CD4-positive, alpha-beta T cell (primary cell): ENCODE measurements at regions of chr7 and their contacts with region 1.

Region 1: DNA sequence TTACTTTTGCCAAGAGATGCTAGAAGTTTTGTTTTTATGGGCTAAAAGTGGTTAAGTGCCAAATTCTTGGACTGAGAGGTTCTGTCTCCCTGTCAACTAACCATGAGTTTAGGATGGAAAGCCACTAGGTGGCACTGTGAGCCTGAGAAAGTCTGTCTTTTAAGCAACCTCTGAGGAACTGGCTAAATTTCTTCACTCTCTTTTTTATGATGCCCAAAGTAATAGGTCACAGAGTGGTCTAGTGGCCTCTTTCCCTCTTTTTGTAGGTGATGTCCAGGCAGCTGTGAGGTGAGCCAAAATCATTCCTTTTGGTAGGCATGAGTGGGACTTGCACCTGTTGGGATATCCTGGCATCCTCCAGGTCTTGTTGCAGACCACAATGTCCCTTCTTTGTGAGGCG is 56.8 kb downstream of the SND1 start:
- DNase-seq: peak; percentile 40 to 83 (median 62)
- ATAC-seq: peak; percentile 62
- H3K4me3 ChIP-seq: no peak overlapping the region
- H3K4me3 Mint-ChIP-seq: no peak overlapping the region
- H3K27ac ChIP-seq: no peak overlapping the region
- H3K27ac Mint-ChIP-seq: peak overlapping the region; percentile 13
- H3K4me1 ChIP-seq: no peaks in the 10 kb centered on the region
- H3K4me1 Mint-ChIP-seq: no peaks in the 10 kb centered on the region
- H3K27me3 ChIP-seq: no peaks in the 10 kb centered on the region
- H3K27me3 Mint-ChIP-seq: no peaks in the 10 kb centered on the region
- CTCF ChIP-seq: peak; percentile 86

Region 2: GRCh38 chr7:127578036-127578684 is 130.6 kb before region 1 on chr7:
- CTCF ChIA-PET with region 1: no interaction called
- POLR2A ChIA-PET with region 1: no interaction called
- intact Hi-C with region 1: no loop called
- DNase-seq: no peak
- ATAC-seq: no peak
- H3K4me3 ChIP-seq: no peak overlapping the region
- H3K4me3 Mint-ChIP-seq: no peak overlapping the region
- H3K27ac ChIP-seq: no peak overlapping the region
- H3K27ac Mint-ChIP-seq: no peak overlapping the region
- H3K4me1 ChIP-seq: peaks cover 24% of the 10 kb centered on the region
- H3K4me1 Mint-ChIP-seq: peaks cover 41% of the 10 kb centered on the region
- H3K27me3 ChIP-seq: no peaks in the 10 kb centered on the region
- H3K27me3 Mint-ChIP-seq: no peaks in the 10 kb centered on the region
- CTCF ChIP-seq: no peak

Region 3: GRCh38 chr7:128031901-128032604 is 323.3 kb after region 1 on chr7:
- CTCF ChIA-PET with region 1: no interaction called
- POLR2A ChIA-PET with region 1: no interaction called
- intact Hi-C with region 1: loop called in 1 of 2 experiments (anchors 10 kb)
- DNase-seq: peak; percentile 10 to 78 (median 37)
- ATAC-seq: peak; percentile 92
- H3K4me3 ChIP-seq: peak overlapping the region; percentile 20
- H3K4me3 Mint-ChIP-seq: peak overlapping the region; percentile 94
- H3K27ac ChIP-seq: no peak overlapping the region
- H3K27ac Mint-ChIP-seq: peak overlapping the region; percentile 64
- H3K4me1 ChIP-seq: peaks cover 23% of the 10 kb centered on the region
- H3K4me1 Mint-ChIP-seq: peaks cover 30% of the 10 kb centered on the region
- H3K27me3 ChIP-seq: peaks cover 0 to 10% of the 10 kb centered on the region in 2 experiments
- H3K27me3 Mint-ChIP-seq: no peaks in the 10 kb centered on the region
- CTCF ChIP-seq: no peak

Region 4: DNA sequence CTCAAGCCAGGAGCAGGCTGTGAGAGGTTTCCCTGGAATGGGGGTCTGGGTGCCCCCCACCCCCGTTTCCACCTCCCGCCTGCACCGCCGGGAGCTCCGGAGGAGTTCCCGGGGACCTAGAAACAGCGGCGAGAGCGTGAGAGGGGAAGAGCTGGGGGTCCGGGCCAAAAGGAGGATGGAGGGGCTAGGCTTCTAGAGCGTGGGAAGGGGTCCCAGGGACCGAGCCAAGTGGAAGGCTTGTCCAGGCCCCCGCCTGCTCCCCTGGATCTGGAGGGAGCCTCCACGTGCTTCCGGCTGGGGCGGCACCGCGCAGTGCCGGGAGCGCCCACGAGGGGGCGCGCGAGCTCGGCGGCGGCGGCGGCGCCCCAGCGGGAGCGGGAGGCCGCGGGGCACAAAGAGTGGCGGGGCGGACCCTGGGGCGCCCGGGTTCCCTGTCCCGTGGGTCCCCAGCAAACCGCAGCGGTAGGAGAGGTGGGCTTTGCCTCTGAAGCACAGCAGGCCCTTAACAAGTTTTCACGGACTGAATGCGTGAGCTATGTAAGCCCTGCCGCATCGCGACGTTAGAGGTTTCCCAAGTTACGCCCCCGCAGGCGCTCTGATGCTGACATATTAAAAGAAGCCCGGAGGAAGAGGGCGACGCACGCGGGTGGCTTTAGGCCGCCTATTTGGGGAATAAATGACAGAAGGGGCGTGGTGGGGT is 426.9 kb after region 1 on chr7:
- CTCF ChIA-PET with region 1: interaction called, 3 read pairs
- POLR2A ChIA-PET with region 1: no interaction called
- intact Hi-C with region 1: loop called (anchors 5 to 10 kb)
- DNase-seq: peak; percentile 26 to 79 (median 50)
- ATAC-seq: peak; percentile 93
- H3K4me3 ChIP-seq: peak overlapping the region; percentile 64
- H3K4me3 Mint-ChIP-seq: peak overlapping the region; percentile 83
- H3K27ac ChIP-seq: no peak overlapping the region
- H3K27ac Mint-ChIP-seq: no peak overlapping the region
- H3K4me1 ChIP-seq: peaks cover 22% of the 10 kb centered on the region
- H3K4me1 Mint-ChIP-seq: peaks cover 18% of the 10 kb centered on the region
- H3K27me3 ChIP-seq: peaks cover 17 to 21% of the 10 kb centered on the region in 2 experiments
- H3K27me3 Mint-ChIP-seq: peaks cover 32% of the 10 kb centered on the region
- CTCF ChIP-seq: peak; percentile 56

Region 5: GRCh38 chr7:128322040-128322643 is 613.4 kb after region 1 on chr7:
- CTCF ChIA-PET with region 1: no interaction called
- POLR2A ChIA-PET with region 1: no interaction called
- intact Hi-C with region 1: loop called (anchors 1 to 5 kb)
- DNase-seq: peak in 4 of 14 experiments; percentile 12 to 62 (median 52)
- ATAC-seq: peak; percentile 65
- H3K4me3 ChIP-seq: no peak overlapping the region
- H3K4me3 Mint-ChIP-seq: no peak overlapping the region
- H3K27ac ChIP-seq: no peak overlapping the region
- H3K27ac Mint-ChIP-seq: peak overlapping the region; percentile 2
- H3K4me1 ChIP-seq: peaks cover 19% of the 10 kb centered on the region
- H3K4me1 Mint-ChIP-seq: peaks cover 21% of the 10 kb centered on the region
- H3K27me3 ChIP-seq: no peaks in the 10 kb centered on the region
- H3K27me3 Mint-ChIP-seq: no peaks in the 10 kb centered on the region
- CTCF ChIP-seq: peak; percentile 34

Region 6: DNA sequence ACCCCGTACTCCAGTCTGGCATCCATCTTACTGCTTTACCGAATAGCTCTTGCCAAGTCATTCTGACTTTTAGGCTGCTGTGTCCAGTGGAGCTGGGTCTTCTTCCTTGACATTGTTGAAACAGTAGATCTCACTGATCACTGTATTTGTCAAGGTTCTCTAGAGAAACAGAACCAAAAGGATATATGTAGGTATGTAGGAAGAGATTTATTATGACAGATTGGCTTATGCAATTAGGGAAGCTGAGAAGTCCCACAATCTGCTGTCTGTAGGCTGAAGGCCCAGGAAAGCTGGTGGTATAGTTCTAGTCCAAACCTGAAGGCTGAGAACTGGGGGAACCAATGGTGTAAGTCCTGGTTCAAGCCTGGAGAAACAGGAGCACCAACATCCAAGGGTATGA is 664.8 kb after region 1 on chr7:
- CTCF ChIA-PET with region 1: no interaction called
- POLR2A ChIA-PET with region 1: no interaction called
- intact Hi-C with region 1: no loop called
- DNase-seq: no peak
- ATAC-seq: no peak
- H3K4me3 ChIP-seq: no peak overlapping the region
- H3K4me3 Mint-ChIP-seq: no peak overlapping the region
- H3K27ac ChIP-seq: no peak overlapping the region
- H3K27ac Mint-ChIP-seq: no peak overlapping the region
- H3K4me1 ChIP-seq: no peaks in the 10 kb centered on the region
- H3K4me1 Mint-ChIP-seq: no peaks in the 10 kb centered on the region
- H3K27me3 ChIP-seq: no peaks in the 10 kb centered on the region
- H3K27me3 Mint-ChIP-seq: peaks cover 5% of the 10 kb centered on the region
- CTCF ChIP-seq: no peak

Region 7: GRCh38 chr7:128387216-128388144 is 678.7 kb after region 1 on chr7:
- CTCF ChIA-PET with region 1: no interaction called
- POLR2A ChIA-PET with region 1: no interaction called
- intact Hi-C with region 1: loop called in 1 of 2 experiments (anchors 5 kb)
- DNase-seq: peak; percentile 42 to 80 (median 58)
- ATAC-seq: peak; percentile 93
- H3K4me3 ChIP-seq: no peak overlapping the region
- H3K4me3 Mint-ChIP-seq: no peak overlapping the region
- H3K27ac ChIP-seq: no peak overlapping the region
- H3K27ac Mint-ChIP-seq: no peak overlapping the region
- H3K4me1 ChIP-seq: peaks cover 5% of the 10 kb centered on the region
- H3K4me1 Mint-ChIP-seq: no peaks in the 10 kb centered on the region
- H3K27me3 ChIP-seq: peaks cover 0 to 5% of the 10 kb centered on the region in 2 experiments
- H3K27me3 Mint-ChIP-seq: no peaks in the 10 kb centered on the region
- CTCF ChIP-seq: peak; percentile 82